ENCODE measurements at regions of chr9 and their contacts with region 1.

Region 1: GRCh38 chr9:114155263-114155972 is at the start of gene COL27A1:
- DNase-seq: peak; percentile 91
- ATAC-seq: peak; percentile 93
- H3K4me3 ChIP-seq: peak within 1 kb of the TSS; percentile 60
- H3K27ac ChIP-seq: no peak within 1 kb of the TSS
- H3K4me1 ChIP-seq: peaks cover 13% of the 10 kb centered on the region
- H3K27me3 ChIP-seq: peaks cover 20% of the 10 kb centered on the region
- CTCF ChIP-seq: peak; percentile 96
- total RNA-seq, gene COL27A1: 13.7 TPM

Region 2: GRCh38 chr9:114037961-114038723 is 117.3 kb before region 1 on chr9:
- intact Hi-C with region 1: no loop called
- DNase-seq: no peak
- ATAC-seq: no peak
- H3K4me3 ChIP-seq: no peak overlapping the region
- H3K27ac ChIP-seq: no peak overlapping the region
- H3K4me1 ChIP-seq: no peaks in the 10 kb centered on the region
- H3K27me3 ChIP-seq: no peaks in the 10 kb centered on the region
- CTCF ChIP-seq: no peak

Region 3: DNA sequence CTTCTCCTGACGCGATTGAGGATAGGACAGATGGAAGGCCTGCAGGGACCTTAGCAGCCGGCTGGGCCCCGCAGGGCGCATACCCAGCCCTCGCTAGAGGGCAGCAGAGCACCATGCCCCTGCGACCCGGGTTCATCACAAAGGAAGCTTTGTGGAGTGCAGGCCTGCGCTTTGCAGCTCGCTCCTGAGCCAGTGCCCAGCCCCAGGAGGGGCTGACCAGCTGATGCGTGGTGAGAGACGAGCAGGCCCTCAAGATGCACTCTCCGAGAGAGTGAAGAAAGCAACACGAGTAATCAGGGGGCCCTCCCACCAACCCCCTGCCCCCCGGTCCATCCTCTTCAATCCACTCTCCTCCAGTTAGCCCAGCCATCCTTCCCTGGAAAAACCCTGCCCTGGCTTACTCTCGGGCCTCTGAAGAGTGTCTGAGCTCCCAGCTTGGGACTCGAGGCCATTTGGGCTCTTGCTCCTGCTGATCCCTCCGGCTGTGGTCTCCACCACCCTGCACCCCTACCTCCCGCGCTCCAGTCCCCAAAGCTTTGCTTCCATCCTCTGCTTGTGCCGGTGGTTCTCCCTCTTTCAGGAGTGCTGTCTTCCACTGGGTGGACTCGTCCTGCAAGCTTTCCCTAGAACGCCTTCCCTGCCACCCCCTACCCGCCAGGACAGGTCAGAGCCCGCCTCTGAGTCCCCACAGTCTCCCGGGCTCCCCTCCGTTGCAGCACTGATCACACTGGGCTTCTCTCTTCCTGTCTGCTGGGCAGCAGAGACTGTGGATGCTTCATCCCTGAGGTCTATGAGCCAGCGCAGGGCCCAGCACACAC is 47.2 kb before region 1 on chr9:
- intact Hi-C with region 1: no loop called
- DNase-seq: peak; percentile 90
- ATAC-seq: peak; percentile 99
- H3K4me3 ChIP-seq: no peak overlapping the region
- H3K27ac ChIP-seq: no peak overlapping the region
- H3K4me1 ChIP-seq: no peaks in the 10 kb centered on the region
- H3K27me3 ChIP-seq: peaks cover under 1% of the 10 kb centered on the region
- CTCF ChIP-seq: peak; percentile 90

Region 4: DNA sequence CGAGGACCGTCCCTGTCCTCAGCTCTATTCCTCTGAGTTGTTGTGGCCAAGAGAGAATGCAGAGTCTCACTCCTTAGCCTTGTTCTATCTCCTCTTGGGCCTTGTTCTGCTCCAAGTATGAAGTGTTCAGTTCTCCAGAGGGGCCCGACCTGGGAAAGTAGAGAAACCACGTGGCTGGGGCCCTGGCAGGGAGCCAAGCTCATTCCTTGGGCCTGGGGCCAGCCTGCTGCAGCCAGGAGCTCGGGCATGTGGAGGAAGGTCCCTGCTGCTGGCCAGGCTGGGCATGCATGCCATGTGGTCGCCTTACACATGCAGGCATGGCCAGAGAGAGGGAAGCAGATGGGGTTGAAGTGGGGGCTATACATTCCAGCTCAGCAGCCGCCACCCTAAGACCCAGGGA is 60.7 kb after region 1 on chr9:
- intact Hi-C with region 1: no loop called
- DNase-seq: no peak
- ATAC-seq: peak; percentile 8
- H3K4me3 ChIP-seq: no peak overlapping the region
- H3K27ac ChIP-seq: no peak overlapping the region
- H3K4me1 ChIP-seq: peaks cover 4% of the 10 kb centered on the region
- H3K27me3 ChIP-seq: no peaks in the 10 kb centered on the region
- CTCF ChIP-seq: no peak

Region 5: DNA sequence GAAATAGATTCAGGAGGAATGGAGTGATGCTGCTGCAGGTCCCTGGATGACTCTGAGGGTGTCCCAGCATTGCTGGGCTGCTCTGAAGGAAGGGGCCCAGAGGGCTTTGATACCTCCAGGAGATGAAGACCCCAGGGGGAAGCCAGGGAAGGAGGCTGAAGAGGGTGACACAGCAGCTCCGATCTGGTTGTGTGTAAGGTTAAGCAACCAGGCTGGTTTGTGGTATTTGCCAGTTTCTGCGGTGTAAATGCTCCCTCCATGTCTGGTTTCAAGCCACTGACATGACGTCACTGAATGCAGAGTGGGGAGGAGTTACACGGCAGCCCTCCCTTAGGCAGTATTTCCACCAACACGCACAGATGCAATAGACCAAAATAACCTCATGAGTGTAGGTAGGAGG is 127.5 kb after region 1 on chr9:
- intact Hi-C with region 1: loop called (anchors 10 kb)
- DNase-seq: peak; percentile 17
- ATAC-seq: no peak
- H3K4me3 ChIP-seq: no peak overlapping the region
- H3K27ac ChIP-seq: no peak overlapping the region
- H3K4me1 ChIP-seq: no peaks in the 10 kb centered on the region
- H3K27me3 ChIP-seq: no peaks in the 10 kb centered on the region
- CTCF ChIP-seq: no peak

Measured in upper lobe of right lung (tissue), 1 donor.